A549 (cell line): ENCODE measurements at regions of chr11 and their contacts with region 1.

Region 1: DNA sequence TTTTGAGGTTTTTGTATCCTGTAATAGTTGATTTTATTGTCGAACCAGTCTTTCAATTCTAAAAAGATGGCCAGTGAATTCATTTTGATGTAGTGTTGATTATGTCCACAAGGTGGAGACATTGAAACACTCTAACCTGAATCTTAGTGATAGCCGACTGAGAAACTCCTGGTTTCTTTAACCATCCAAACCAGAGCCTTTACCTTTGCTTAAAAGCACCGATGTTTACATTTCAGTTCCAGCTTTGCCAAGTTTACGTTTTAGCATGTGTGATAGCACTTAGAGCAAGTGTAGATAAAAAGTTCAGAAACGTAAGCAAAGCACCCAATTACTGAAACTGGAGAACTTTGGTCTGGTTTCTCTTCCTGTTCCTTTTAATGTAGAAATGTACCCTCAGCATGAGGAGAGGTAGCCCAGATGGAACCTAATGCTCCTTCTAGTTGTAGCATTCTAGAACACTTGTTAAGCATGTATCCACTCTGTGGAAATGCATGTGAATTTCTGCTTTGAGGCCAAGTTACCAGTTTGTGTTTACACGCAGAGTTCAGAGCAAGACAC is 208.6 kb downstream of the DBX1 start:
- DNase-seq: peak; percentile 35 to 64
- ATAC-seq: peak; percentile 56 to 58; a peak in 4 of 6 replicates
- H3K4me3 ChIP-seq: no peak overlapping the region
- H3K27ac ChIP-seq: peak overlapping the region; percentile 79 to 86
- H3K4me1 ChIP-seq: peaks cover 41% of the 10 kb centered on the region
- CTCF ChIP-seq: peak; percentile 87
- EP300 ChIP-seq: no peak
- POLR2A ChIP-seq: no peak
- RAD21 ChIP-seq: peak; percentile 79 to 89

Region 2: DNA sequence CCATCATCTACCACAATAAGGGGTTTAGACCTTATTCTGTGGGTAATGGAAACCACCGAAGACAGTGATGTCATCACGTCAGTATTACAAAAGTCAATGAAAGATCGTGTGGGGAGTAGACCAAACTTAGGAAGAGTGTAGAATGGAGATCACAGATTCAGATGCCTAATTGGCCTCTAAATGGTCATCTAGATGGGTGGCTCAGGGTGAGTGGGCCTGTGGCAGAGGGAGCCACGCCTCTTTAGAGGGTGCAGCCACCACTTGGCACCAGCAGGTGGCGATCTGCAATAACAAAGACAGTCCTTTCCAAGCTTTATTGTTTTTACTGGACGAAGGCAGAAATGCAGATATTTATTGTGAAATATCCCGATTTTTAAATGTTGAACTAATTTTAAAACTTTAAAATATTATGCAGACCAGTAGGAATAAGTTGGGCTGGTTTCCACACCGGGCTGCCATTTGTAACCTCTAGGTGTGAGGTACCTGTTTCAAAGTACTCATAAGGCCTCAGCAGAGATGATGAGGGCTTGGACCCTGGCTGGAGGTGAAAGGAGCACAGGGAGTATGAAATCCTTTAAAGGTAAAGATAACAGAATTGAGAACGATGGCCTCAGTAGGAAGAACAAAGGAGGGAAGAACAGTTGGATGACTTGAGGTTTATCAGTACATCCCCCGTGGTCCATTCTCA is 13.3 kb before region 1 on chr11:
- CTCF ChIA-PET with region 1: interaction called, 45 read pairs
- POLR2A ChIA-PET with region 1: no interaction called
- DNase-seq: peak; percentile 63 to 69
- ATAC-seq: peak; percentile 67 to 93; a peak in 5 of 6 replicates
- H3K4me3 ChIP-seq: no peak overlapping the region
- H3K27ac ChIP-seq: peak overlapping the region in 1 of 2 experiments; percentile 35; a peak in 1 of 6 replicates
- H3K4me1 ChIP-seq: peaks cover 12% of the 10 kb centered on the region; the same call in 2 of the 3 replicates
- CTCF ChIP-seq: peak; percentile 90
- EP300 ChIP-seq: no peak
- POLR2A ChIP-seq: no peak
- RAD21 ChIP-seq: peak; percentile 83 to 86

Region 3: GRCh38 chr11:19978668-19979518 is 27.3 kb after region 1 on chr11:
- CTCF ChIA-PET with region 1: interaction called, 13 read pairs
- POLR2A ChIA-PET with region 1: no interaction called
- DNase-seq: peak; percentile 57 to 79
- ATAC-seq: peak; percentile 90 to 94
- H3K4me3 ChIP-seq: no peak overlapping the region; the same call in 2 of the 3 replicates
- H3K27ac ChIP-seq: peak overlapping the region; percentile 91 to 99
- H3K4me1 ChIP-seq: peaks cover 69% of the 10 kb centered on the region
- CTCF ChIP-seq: no peak
- EP300 ChIP-seq: peak; percentile 50 to 81; a peak in 3 of 5 replicates
- POLR2A ChIP-seq: no peak
- RAD21 ChIP-seq: peak in 1 of 2 experiments; percentile 25; a peak in 1 of 5 replicates

Region 4: DNA sequence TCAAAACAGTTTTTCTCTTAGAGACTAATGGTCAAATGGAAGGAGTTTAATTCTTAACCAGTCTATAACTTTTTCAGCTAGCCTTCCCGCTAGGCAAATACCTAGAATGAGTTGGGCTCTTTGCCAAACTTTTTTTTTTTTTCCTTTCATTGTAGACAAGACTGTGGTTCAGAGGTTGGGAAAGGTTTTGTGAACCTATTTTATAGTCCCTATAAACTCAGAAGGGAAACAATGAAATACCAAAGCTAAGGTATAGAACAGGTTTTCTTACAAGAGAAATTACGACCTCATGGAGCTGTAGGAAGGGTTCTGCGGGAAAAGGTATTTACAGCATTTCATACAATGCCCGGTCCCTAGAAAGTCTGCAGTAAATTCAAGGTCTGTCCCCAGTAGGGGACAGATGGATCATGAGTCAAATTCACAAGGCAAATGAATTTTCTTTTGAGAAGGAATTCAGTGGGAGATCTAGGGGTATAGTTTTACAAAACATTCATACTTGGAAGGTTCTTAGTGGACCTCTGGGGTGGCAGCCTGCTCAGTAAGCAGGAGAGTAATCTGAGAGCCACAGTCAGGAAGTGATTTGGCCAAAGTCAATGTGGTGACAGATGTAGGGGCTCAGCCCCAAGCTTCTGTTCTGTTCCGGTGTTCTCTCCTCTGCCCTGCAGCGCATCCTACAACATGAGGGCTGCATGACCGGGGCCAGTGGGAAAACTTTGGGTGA is 61.9 kb after region 1 on chr11:
- CTCF ChIA-PET with region 1: interaction called, 13 read pairs
- POLR2A ChIA-PET with region 1: no interaction called
- DNase-seq: no peak
- ATAC-seq: peak; percentile 32 to 61; a peak in 3 of 6 replicates
- H3K4me3 ChIP-seq: no peak overlapping the region
- H3K27ac ChIP-seq: peak overlapping the region; percentile 67 to 82
- H3K4me1 ChIP-seq: peaks cover 68% of the 10 kb centered on the region
- CTCF ChIP-seq: no peak
- EP300 ChIP-seq: no peak
- POLR2A ChIP-seq: no peak
- RAD21 ChIP-seq: no peak

Region 5: GRCh38 chr11:20134991-20135736 is 183.5 kb after region 1 on chr11:
- CTCF ChIA-PET with region 1: interaction called, 172 read pairs
- POLR2A ChIA-PET with region 1: no interaction called
- DNase-seq: no peak
- ATAC-seq: no peak
- H3K4me3 ChIP-seq: no peak overlapping the region
- H3K27ac ChIP-seq: no peak overlapping the region
- H3K4me1 ChIP-seq: peaks cover 4% of the 10 kb centered on the region; the same call in 1 of the 3 replicates
- CTCF ChIP-seq: no peak
- EP300 ChIP-seq: no peak
- POLR2A ChIP-seq: no peak
- RAD21 ChIP-seq: no peak